ENCODE measurements at regions of chr16 and their contacts with region 1.

Region 1: GRCh38 chr16:527006-527753 is at the start of gene CAPN15:
- DNase-seq: peak; percentile 91
- ATAC-seq: peak; percentile 81
- H3K4me3 Mint-ChIP-seq: peak within 1 kb of the TSS; percentile 86
- H3K27ac Mint-ChIP-seq: peak within 1 kb of the TSS; percentile 82
- H3K4me1 Mint-ChIP-seq: peaks cover 43% of the 10 kb centered on the region
- H3K27me3 Mint-ChIP-seq: no peaks in the 10 kb centered on the region
- CTCF ChIP-seq: no peak
- total RNA-seq, gene CAPN15: 77.0 and 95.1 TPM in 2 replicates

Region 2: GRCh38 chr16:138049-138417 is 389.1 kb before region 1 on chr16:
- CTCF ChIA-PET with region 1: no interaction called
- POLR2A ChIA-PET with region 1: no interaction called
- intact Hi-C with region 1: loop called (anchors 5 kb)
- DNase-seq: peak; percentile 39
- ATAC-seq: peak; percentile 23
- H3K4me3 Mint-ChIP-seq: peak overlapping the region; percentile 78
- H3K27ac Mint-ChIP-seq: peak overlapping the region; percentile 50
- H3K4me1 Mint-ChIP-seq: peaks cover 11% of the 10 kb centered on the region
- H3K27me3 Mint-ChIP-seq: no peaks in the 10 kb centered on the region
- CTCF ChIP-seq: no peak

Region 3: GRCh38 chr16:352547-353403 is 174.4 kb before region 1 on chr16 and contains the start of gene AXIN1:
- CTCF ChIA-PET with region 1: no interaction called
- POLR2A ChIA-PET with region 1: no interaction called
- intact Hi-C with region 1: loop called (anchors 2 kb)
- DNase-seq: peak; percentile 100
- ATAC-seq: peak; percentile 89
- H3K4me3 Mint-ChIP-seq: peak within 1 kb of the TSS; percentile 85
- H3K27ac Mint-ChIP-seq: peak within 1 kb of the TSS; percentile 77
- H3K4me1 Mint-ChIP-seq: peaks cover 32% of the 10 kb centered on the region
- H3K27me3 Mint-ChIP-seq: no peaks in the 10 kb centered on the region
- CTCF ChIP-seq: no peak
- total RNA-seq, gene AXIN1: 27.9 and 30.6 TPM in 2 replicates

Region 4: DNA sequence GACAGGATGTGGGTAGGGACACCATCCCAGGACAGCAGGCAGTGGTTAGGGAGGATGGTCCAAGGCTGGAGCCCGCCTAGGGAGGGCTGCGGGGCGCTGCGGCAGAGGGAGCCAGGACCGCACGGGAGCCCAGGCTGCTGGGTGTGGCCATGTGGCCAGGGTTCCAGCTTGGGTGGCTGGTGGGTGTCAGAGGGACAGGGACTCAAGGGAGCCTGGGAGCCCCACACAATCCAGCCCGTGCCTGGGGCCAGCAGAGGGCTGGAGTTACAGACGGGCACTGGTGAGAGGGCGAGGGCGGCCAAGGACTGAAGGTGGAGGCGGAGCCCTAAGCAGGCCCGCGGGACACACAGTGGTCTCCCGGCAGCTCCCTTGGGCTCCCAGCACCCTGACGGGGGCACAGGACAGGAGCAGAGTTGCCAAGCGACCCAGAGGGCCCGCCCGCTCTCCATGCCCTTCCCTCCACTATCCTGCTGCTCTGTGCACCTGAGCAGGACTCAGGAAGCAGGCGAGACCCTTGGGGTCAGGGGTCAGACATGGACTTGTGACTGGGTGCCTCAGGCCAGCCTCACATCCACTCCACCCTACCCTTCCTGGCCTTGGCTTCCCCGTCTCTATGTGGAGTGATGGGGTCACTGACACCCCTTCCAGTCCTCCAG is 163.9 kb before region 1 on chr16:
- CTCF ChIA-PET with region 1: no interaction called
- POLR2A ChIA-PET with region 1: no interaction called
- intact Hi-C with region 1: no loop called
- DNase-seq: no peak
- ATAC-seq: no peak
- H3K4me3 Mint-ChIP-seq: no peak overlapping the region
- H3K27ac Mint-ChIP-seq: no peak overlapping the region
- H3K4me1 Mint-ChIP-seq: peaks cover 3% of the 10 kb centered on the region
- H3K27me3 Mint-ChIP-seq: peaks cover 5% of the 10 kb centered on the region
- CTCF ChIP-seq: no peak

Region 5: DNA sequence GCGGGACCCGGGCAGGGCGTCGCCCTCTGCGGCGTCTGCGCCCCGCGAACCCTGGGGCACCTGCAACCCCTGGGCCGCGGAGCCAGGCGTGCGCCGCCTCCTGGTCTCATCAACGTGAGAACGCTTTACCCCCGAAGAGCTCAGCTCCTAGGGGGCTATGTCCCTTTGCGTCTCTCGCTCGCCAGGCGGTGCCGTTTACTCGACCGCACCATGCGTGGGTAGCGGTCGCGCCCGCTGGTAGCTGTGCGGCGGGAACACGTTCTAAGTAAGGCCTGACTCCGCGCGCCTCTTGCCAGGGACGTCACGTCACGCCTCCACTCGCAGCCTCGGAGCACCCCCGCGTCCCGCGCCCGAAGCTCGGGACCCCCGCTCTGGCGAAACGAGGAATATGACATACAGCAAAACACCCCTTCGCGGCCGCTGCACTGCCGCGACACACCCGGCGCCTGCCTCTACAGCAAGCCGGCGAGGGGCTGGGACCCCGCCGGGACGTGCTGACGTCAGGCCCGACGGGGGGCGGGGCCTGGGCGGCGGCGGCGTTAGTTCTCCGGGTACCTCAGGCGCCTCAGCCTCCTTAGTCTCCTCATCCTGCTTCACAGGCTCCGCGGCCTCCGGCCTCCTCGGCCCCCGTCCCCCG is 102.0 kb before region 1 on chr16 and contains the start of gene RAB11FIP3:
- CTCF ChIA-PET with region 1: no interaction called
- POLR2A ChIA-PET with region 1: no interaction called
- intact Hi-C with region 1: loop called (anchors 1 kb)
- DNase-seq: peak; percentile 93
- ATAC-seq: peak; percentile 92
- H3K4me3 Mint-ChIP-seq: peak within 1 kb of the TSS; percentile 89
- H3K27ac Mint-ChIP-seq: peak within 1 kb of the TSS; percentile 82
- H3K4me1 Mint-ChIP-seq: peaks cover 30% of the 10 kb centered on the region
- H3K27me3 Mint-ChIP-seq: no peaks in the 10 kb centered on the region
- CTCF ChIP-seq: no peak
- total RNA-seq, gene RAB11FIP3: 32.2 and 35.4 TPM in 2 replicates

Region 6: GRCh38 chr16:471353-472198 is 55.6 kb before region 1 on chr16:
- CTCF ChIA-PET with region 1: no interaction called
- POLR2A ChIA-PET with region 1: no interaction called
- intact Hi-C with region 1: no loop called
- DNase-seq: no peak
- ATAC-seq: no peak
- H3K4me3 Mint-ChIP-seq: no peak overlapping the region
- H3K27ac Mint-ChIP-seq: no peak overlapping the region
- H3K4me1 Mint-ChIP-seq: no peaks in the 10 kb centered on the region
- H3K27me3 Mint-ChIP-seq: no peaks in the 10 kb centered on the region
- CTCF ChIP-seq: no peak

Region 7: GRCh38 chr16:589658-590159 is 62.5 kb after region 1 on chr16 and contains the start of gene RAB40C:
- CTCF ChIA-PET with region 1: no interaction called
- POLR2A ChIA-PET with region 1: no interaction called
- intact Hi-C with region 1: loop called (anchors 1 kb)
- DNase-seq: peak; percentile 96
- ATAC-seq: peak; percentile 86
- H3K4me3 Mint-ChIP-seq: peak within 1 kb of the TSS; percentile 99
- H3K27ac Mint-ChIP-seq: peak within 1 kb of the TSS; percentile 100
- H3K4me1 Mint-ChIP-seq: peaks cover 42% of the 10 kb centered on the region
- H3K27me3 Mint-ChIP-seq: no peaks in the 10 kb centered on the region
- CTCF ChIP-seq: no peak
- total RNA-seq, gene RAB40C: 10.5 and 13.1 TPM in 2 replicates

Region 8: GRCh38 chr16:667780-668518 is 140.8 kb after region 1 on chr16 and contains the start of gene RHOT2:
- CTCF ChIA-PET with region 1: no interaction called
- POLR2A ChIA-PET with region 1: no interaction called
- intact Hi-C with region 1: loop called (anchors 5 kb)
- DNase-seq: peak; percentile 96
- ATAC-seq: peak; percentile 98
- H3K4me3 Mint-ChIP-seq: peak within 1 kb of the TSS; percentile 80
- H3K27ac Mint-ChIP-seq: peak within 1 kb of the TSS; percentile 80
- H3K4me1 Mint-ChIP-seq: peaks cover 12% of the 10 kb centered on the region
- H3K27me3 Mint-ChIP-seq: no peaks in the 10 kb centered on the region
- CTCF ChIP-seq: peak; percentile 7
- total RNA-seq, gene RHOT2: 141 and 170 TPM in 2 replicates